ENCODE measurements at regions of chr1 and their contacts with region 1.

Region 1: DNA sequence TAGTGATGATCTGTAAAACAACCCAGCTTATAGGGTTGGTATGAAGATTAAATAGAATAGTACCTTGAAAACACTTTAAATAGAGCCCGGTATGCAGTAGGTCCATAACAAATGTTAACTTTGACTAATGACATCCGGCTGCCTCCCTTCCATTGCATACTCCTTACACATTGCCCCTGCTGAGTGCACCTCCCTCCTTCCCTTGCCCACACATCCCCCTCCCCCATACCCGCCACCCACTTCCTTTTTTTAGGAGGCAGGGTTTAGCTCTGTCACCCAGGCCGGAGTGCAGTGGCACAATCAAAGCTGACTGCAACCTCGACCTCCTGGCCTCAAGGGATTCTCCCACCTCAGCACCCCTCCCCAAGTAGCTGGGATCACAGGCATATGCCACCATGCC is 24.4 kb upstream of the ZC3H12A start:
- DNase-seq: no peak
- ATAC-seq: no peak
- H3K4me3 ChIP-seq: no peak overlapping the region
- H3K27ac ChIP-seq: no peak overlapping the region
- H3K4me1 ChIP-seq: peaks cover under 1 to 2% of the 10 kb centered on the region in 2 experiments; a peak in 4 of 5 replicates
- H3K27me3 ChIP-seq: peaks cover 18 to 58% of the 10 kb centered on the region in 2 experiments; a peak in 3 of 5 replicates
- CTCF ChIP-seq: no peak
- EP300 ChIP-seq: no peak
- POLR2A ChIP-seq: no peak
- RAD21 ChIP-seq: no peak

Region 2: DNA sequence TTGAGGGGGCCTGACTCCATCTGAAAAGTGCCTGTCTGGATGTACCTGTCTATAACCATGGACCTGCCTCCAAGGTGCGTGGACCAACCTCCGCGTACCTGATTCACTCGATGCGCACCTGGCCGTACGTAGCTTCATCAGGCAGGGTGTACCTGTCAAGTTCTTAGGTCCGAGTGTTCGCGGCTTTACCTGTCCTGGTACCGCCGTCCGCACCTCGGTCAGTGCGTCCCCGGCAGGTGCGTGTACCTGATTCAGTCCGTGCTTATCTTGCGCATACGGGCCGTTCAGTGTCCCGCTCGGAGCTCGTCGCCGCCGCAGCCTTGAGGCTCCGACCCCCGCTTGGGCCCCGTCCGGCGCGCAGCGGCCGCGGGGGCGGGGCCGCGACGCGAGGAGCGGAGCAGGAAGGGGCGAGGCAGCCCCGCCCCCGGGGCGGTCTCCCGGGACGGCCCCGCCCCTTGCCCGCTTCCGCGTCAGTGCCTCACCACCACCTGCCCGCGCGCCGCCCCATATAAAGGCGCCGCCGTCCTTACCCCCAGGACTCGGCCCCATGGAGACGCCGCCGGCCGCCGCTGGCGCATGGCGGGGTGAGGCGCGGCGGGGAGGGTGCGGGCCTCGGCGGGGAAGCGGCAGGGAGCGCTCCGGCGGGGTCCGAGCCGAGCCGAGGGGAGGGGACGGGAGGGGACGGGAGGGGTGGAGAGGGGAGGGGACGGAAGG is 24.3 kb after region 1 on chr1 and contains the start of gene ZC3H12A:
- CTCF ChIA-PET with region 1: interaction called, 3 read pairs
- POLR2A ChIA-PET with region 1: interaction called, 13 read pairs
- in situ Hi-C with region 1: no loop called
- intact Hi-C with region 1: no loop called
- DNase-seq: peak; percentile 96 to 99 (median 99)
- ATAC-seq: peak; percentile 87
- H3K4me3 ChIP-seq: peak within 1 kb of the TSS; percentile 77
- H3K27ac ChIP-seq: peak within 1 kb of the TSS; percentile 94
- H3K4me1 ChIP-seq: peaks cover 52 to 62% of the 10 kb centered on the region in 2 experiments
- H3K27me3 ChIP-seq: 0 out of 5 replicates have a peak, but pooled peaks cover 0 to 3% of the 10 kb centered on the region in 2 experiments
- CTCF ChIP-seq: no peak
- EP300 ChIP-seq: 0 out of 2 replicates have a peak, but pooled peaks have one; percentile 9
- POLR2A ChIP-seq: peak; percentile 83
- RAD21 ChIP-seq: no peak
- polyA plus RNA-seq, gene ZC3H12A: 0.14 to 0.22 TPM

Region 3: DNA sequence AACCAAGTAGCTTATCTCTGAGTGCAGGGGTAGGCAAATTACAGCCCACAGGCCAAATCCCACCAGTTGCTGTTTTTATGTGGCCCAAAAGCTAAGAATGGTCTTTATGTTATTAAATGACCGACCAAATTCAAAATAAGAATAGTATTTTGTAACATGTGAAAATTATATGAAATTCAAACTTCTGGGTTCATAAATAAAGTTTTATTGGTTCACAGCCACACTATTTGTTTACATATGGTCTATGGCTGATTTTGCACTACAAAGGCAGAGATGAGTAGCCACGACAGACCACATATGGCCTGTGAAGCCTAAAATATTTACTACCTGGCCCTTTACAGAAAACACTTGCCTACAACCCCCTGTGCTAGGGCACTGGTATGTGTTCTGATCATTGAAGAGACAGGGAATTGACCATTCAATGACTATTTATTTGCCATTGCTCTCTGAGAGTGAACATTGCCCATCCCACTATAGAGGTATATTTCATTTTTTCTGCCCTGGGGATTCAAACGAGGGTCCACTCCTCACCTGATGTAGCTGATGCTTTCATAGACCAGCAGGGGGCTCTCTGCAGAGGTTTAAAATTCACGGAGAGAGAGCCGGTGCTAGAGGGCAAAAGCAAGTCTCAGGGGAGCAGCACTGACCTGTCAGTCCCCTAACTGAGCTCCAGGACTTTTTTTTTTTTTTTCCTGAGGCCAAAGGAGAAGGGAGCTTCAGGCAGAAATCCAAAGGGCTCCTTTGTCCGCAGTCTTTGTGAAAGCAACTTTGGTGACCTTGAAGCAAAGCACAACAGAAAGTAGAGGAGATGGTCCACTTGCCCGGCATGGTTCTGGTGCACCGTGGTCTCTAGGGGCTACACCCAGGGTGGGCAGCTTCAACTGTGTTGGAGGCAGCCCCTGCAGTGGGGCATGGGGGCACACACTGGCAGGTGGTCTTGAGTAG is 153.1 kb after region 1 on chr1:
- CTCF ChIA-PET with region 1: interaction called, 3 read pairs
- POLR2A ChIA-PET with region 1: interaction called, 3 read pairs
- in situ Hi-C with region 1: no loop called
- intact Hi-C with region 1: loop called (anchors 10 kb)
- DNase-seq: peak; percentile 68 to 74 (median 70)
- ATAC-seq: peak; percentile 90
- H3K4me3 ChIP-seq: no peak overlapping the region
- H3K27ac ChIP-seq: no peak overlapping the region
- H3K4me1 ChIP-seq: peaks cover 0 to 4% of the 10 kb centered on the region in 2 experiments; a peak in 2 of 5 replicates
- H3K27me3 ChIP-seq: peaks cover 51 to 66% of the 10 kb centered on the region in 2 experiments
- CTCF ChIP-seq: peak; percentile 78 to 86 (median 80)
- EP300 ChIP-seq: no peak
- POLR2A ChIP-seq: no peak
- RAD21 ChIP-seq: peak; percentile 42 to 55

Region 4: DNA sequence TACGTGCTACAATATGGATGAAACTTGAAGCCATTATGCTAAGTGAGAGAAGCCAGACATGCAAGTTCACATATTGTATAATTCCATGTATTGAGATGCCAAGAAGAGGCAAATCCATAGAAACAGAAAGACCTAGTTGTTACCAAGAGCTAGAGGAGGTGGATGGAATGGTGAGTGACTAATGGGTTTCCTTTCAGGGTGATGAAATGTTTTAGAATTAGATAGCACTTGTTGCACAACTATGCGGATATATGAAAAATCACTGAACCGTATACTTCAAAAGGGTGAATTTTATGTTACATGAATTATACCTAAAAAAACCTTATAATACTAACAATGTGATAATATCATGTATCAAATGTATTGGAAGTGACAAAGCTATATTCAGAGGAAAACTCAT is 296.9 kb after region 1 on chr1:
- CTCF ChIA-PET with region 1: no interaction called
- POLR2A ChIA-PET with region 1: no interaction called
- in situ Hi-C with region 1: no loop called
- intact Hi-C with region 1: no loop called
- DNase-seq: no peak
- ATAC-seq: no peak
- H3K4me3 ChIP-seq: no peak overlapping the region
- H3K27ac ChIP-seq: no peak overlapping the region
- H3K4me1 ChIP-seq: no peaks in the 10 kb centered on the region
- H3K27me3 ChIP-seq: peaks cover 11 to 20% of the 10 kb centered on the region in 2 experiments; a peak in 4 of 5 replicates
- CTCF ChIP-seq: no peak
- EP300 ChIP-seq: no peak
- POLR2A ChIP-seq: no peak
- RAD21 ChIP-seq: no peak